WTC11 (cell line): ENCODE measurements at regions of chr15 and their contacts with region 1.

Region 1: DNA sequence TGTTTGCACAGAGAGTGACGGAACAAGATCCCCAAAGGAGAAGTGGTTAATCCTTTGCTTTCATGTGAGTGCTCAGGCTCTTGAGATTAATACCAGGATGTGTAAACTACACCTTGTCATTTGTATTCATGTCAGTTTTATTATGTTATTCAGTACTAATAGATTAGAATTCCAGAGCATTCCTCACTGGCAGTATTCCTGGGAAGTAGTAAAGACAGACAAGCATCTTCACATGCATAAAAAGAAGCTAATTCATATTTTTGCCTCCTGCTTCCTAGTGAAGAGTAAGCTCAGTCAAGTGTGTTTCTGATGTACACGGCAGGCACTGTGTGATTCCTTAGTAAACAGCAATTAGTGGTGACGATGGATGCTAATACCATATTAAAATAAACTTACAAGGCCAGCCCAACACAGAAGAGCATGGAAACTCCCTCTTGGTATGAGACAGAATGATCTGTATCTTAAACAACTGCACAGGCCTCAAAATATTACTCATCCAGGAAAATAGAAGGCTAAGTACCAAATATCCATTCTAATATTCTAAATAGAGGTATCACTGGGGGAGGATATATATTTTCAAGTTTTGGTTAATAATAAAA is 336.8 kb upstream of the MCTP2 start:
- DNase-seq: no peak
- ATAC-seq: no peak
- H3K4me3 Mint-ChIP-seq: no peak overlapping the region
- H3K27ac Mint-ChIP-seq: no peak overlapping the region
- H3K4me1 Mint-ChIP-seq: peaks cover 3% of the 10 kb centered on the region; the same call in 1 of the 2 replicates
- H3K27me3 Mint-ChIP-seq: no peaks in the 10 kb centered on the region
- CTCF ChIP-seq: no peak

Region 2: DNA sequence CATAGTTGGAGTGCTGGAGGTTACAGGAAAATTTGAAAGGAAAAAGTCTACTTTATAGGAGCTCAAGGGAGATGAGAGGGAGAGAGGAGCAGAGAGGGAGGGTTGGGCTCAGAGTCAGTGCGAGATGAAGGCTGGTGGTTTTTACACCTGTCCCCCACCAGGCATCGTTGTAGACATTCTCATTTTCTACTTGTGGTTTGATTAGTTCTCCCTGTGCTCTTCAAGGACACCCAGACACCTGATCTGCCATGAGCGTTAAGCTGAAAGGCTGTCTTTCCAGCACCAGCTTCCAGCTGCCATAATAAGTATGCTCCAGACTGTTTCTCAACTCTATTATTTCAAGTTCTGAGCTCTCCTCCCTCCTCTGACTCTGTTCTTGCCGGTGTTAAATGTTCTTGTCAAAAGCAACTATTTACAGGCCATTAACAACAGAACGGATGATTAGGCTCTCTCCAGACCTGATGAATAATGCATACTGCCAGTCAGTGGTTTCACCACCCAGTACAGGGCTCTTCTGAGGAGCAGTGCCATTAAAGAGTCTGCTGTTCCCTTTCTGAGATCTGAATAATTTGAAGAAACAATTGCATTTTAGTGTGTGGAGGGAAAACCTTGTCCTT is 177.8 kb before region 1 on chr15:
- CTCF ChIA-PET with region 1: no interaction called
- POLR2A ChIA-PET with region 1: no interaction called
- DNase-seq: no peak
- ATAC-seq: peak; percentile 38
- H3K4me3 Mint-ChIP-seq: no peak overlapping the region
- H3K27ac Mint-ChIP-seq: 0 out of 2 replicates have a peak overlapping the region, but pooled peaks have one; percentile 22
- H3K4me1 Mint-ChIP-seq: peaks cover 11% of the 10 kb centered on the region
- H3K27me3 Mint-ChIP-seq: no peaks in the 10 kb centered on the region
- CTCF ChIP-seq: no peak

Region 3: GRCh38 chr15:93882141-93882540 is 12.4 kb before region 1 on chr15:
- CTCF ChIA-PET with region 1: no interaction called
- POLR2A ChIA-PET with region 1: no interaction called
- DNase-seq: no peak
- ATAC-seq: no peak
- H3K4me3 Mint-ChIP-seq: no peak overlapping the region
- H3K27ac Mint-ChIP-seq: no peak overlapping the region
- H3K4me1 Mint-ChIP-seq: peaks cover 21% of the 10 kb centered on the region
- H3K27me3 Mint-ChIP-seq: no peaks in the 10 kb centered on the region; the same call in 1 of the 2 replicates
- CTCF ChIP-seq: no peak

Region 4: DNA sequence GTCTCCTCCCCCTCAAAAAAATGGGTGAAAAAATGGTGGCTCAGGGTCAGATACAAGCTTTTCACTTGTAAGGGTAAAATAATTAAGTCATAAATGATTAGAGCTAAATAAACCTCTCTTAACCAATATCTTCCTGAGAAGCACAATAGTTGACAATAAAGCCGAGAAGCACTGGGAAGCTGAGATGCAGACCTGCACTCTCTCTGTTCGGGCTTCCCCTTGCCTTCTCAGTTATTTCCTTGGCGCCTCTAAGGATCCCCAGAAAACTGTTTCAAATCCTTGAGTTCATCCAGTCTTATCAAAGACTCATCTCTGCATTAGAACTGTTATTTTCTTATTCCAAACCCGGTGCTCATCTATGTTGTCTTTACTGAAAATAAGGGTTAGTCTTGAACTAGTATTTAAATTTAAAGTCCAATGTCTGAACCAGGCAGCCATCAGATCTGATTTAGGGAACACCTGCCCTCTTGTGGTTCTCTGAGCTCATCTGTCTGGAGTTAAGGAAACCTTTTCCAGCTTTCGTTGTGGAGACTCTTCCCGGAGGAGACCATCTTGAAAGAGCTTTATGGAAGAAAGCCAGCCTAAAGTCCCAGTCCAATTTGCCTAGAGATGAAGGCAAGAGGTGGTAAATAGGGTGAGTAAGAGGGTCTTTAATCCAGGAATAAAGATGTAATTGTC is 80.4 kb after region 1 on chr15:
- CTCF ChIA-PET with region 1: interaction called, 11 read pairs
- POLR2A ChIA-PET with region 1: no interaction called
- DNase-seq: peak; percentile 22
- ATAC-seq: peak; percentile 97
- H3K4me3 Mint-ChIP-seq: peak overlapping the region; percentile 9; the same call in 1 of the 2 replicates
- H3K27ac Mint-ChIP-seq: no peak overlapping the region
- H3K4me1 Mint-ChIP-seq: peaks cover 8% of the 10 kb centered on the region
- H3K27me3 Mint-ChIP-seq: no peaks in the 10 kb centered on the region
- CTCF ChIP-seq: peak; percentile 25; the same call in 1 of the 2 replicates